HEK293 (cell line): ENCODE measurements at regions of chr19 and their contacts with region 1.

Region 1: DNA sequence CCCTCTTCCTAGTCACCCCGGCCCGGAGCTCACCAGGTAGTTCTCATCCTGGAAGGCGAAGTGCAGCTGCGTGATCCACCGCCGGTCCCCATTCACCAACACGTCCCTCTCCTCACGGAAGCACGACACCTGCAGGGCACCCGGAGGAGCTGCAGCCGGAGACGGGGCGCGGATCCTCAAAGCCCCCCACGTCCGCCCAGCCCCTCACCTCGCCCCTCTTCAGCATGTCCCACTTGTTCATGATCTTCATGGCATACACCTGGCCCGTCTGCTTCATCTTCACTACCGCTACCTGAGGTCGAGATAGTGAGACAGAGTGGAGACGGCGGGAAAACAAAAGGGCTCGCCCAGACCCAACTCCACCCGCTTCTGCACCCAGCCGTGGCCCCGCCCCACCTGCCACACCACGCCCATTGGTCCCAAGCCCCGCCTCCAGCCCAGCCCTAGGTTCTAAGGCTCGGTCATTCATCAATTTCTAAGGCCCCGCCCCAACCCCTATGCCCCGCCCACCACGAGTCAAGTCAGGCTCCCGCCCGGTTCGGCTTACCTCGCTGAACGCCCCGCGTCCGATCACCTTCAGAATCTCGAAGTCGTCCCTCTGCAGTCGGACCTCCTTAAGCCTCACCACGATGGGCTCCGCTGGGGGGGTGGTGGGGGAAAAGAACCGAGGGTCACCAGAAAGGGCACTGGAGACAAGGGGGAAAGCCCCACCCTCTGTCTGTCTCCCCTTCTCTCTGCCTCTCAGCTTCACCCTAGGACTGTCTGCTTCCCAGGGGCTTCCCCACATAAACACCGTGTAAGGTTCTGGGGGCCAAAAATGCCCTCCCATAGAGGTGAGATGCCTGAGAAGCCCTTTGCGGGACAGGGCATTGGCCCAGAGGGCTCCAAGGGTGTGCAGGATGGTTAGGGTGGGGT is 2.8 kb downstream of the DMPK start:
- H3K4me3 ChIP-seq: no peak overlapping the region
- H3K27ac ChIP-seq: no peak overlapping the region
- H3K4me1 ChIP-seq: peaks cover 9% of the 10 kb centered on the region; the same call in 1 of the 2 replicates
- CTCF ChIP-seq: peak; percentile 18; the same call in 1 of the 2 replicates

Region 2: GRCh38 chr19:45670670-45671453 is 108.6 kb before region 1 on chr19:
- CTCF ChIA-PET with region 1: no interaction called
- POLR2A ChIA-PET with region 1: no interaction called
- H3K4me3 ChIP-seq: no peak overlapping the region
- H3K27ac ChIP-seq: no peak overlapping the region
- H3K4me1 ChIP-seq: peaks cover 10% of the 10 kb centered on the region
- CTCF ChIP-seq: no peak

Region 3: GRCh38 chr19:45701676-45702075 is 77.8 kb before region 1 on chr19:
- CTCF ChIA-PET with region 1: no interaction called
- POLR2A ChIA-PET with region 1: no interaction called
- H3K4me3 ChIP-seq: no peak overlapping the region
- H3K27ac ChIP-seq: no peak overlapping the region
- H3K4me1 ChIP-seq: no peaks in the 10 kb centered on the region
- CTCF ChIP-seq: no peak

Region 4: DNA sequence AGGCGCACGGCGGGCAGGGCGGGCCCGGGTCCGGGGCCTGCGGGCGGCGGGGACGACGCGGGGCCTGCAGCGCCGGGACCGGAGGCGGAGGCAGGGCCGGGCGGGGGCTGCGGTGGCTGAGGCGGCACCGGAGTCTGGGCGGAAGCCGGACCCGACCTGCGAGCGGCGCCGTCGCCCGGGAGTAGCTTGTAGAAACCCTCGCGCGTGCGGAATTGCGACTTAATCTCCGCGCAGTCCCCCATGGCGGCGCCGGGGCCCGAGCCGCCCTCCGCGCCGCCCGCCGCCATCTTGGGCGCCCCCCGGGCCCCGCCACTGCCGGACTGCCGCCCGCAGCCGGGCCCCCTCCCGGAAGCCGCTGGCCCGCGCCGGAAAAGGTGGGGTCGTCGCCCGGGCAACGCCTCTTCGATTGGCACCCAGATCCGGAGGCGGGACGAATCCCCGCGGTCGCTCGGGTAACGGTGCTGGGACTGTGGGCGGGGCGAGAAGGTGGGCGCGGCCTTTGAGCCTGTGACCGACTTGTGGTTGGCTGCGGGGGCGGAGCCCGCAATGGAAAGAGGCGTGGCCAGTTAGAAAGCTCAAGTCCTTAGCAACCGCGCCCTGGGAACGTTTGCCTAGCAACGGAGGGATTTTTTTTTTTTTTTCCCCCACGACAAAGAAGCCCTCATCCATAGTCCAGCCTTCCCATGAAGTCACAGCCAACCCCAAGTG is 13.1 kb after region 1 on chr19 and contains the start of gene DMWD:
- CTCF ChIA-PET with region 1: interaction called, 3 read pairs
- POLR2A ChIA-PET with region 1: interaction called, 18 read pairs
- H3K4me3 ChIP-seq: peak within 1 kb of the TSS; percentile 86
- H3K27ac ChIP-seq: peak within 1 kb of the TSS; percentile 96
- H3K4me1 ChIP-seq: peaks cover 13% of the 10 kb centered on the region
- CTCF ChIP-seq: no peak